ENCODE measurements at regions of chr1 and their contacts with region 1.

Region 1: DNA sequence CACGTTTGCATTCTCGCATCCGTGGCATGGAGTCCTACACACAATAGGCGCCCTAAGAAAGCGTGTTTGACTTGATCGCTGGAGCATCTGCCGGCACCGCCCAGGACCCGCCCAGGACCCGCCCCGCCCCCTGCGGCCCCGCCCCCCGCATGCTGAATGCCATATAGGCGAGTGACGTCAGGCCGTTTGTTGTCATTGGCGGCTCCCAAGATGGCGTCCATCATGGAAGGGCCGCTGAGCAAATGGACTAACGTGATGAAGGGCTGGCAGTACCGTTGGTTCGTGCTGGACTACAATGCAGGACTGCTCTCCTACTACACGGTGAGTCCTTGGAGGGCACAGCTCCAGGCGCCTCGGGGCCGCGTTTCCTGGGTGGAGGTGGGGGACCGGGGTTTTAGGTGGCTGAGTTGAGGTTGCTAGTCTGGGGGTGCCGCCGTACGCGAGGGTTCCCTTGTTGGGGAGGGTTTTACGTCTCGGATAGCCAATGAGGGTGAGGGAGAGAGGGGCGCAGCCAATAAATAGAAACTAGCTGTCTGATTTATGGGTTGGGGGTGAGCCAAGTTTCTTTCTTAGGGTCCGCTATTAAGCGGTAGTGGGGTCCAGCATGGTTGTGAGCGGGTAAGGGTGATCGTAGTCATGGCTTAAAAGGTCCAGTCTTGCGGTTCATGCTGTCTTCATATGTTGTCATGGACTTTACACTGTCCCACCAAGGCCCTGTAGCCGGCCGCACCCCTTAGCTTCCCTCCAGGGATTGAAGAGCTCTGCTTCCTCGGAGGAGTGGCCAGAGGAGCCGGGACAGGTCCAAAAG is at the start of gene OSBPL9:
- DNase-seq: peak; percentile 42
- H3K4me3 ChIP-seq: peak within 1 kb of the TSS; percentile 64
- H3K27me3 ChIP-seq: no peaks in the 10 kb centered on the region
- CTCF ChIP-seq: no peak
- polyA plus RNA-seq, gene OSBPL9: 68.3 and 86.5 TPM in 2 replicates

Region 2: DNA sequence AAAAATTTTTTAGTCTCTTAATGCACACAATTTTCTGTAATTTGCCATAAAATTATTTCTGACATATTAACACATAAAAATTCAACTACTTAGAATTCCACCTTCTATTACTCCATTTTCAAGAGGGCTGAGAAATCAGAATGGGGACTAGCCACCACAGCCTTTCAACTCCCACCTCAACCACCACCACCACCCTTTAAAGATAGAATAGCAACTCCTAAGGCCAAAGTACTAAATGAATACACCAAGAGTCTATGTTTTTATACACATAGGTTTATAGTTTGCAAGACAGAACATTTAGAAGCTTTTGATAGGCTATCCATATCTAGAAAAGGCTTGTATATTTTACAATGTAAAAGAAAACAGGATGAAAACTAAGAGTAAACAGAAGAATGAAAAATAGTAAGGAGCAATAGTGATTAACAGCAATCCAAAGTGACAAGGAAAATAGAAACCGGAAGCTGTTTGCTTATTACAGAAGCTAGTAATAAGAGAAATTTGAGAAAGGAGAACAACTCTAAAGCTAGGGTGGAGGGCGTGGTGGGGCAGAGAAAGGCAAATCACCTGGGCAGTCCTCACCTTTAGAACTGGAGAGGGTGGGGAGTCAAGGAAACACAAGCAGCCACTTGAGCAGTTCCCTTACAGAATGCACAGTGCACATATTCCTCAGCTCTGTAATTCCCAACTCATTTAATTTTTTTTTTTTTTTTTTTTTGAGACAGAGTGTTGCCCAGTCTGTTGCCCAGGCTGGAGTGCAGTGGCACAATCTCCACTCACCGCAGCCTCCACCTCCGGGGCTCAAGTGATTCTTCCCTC is 125.7 kb before region 1 on chr1:
- CTCF ChIA-PET with region 1: no interaction called
- POLR2A ChIA-PET with region 1: no interaction called
- DNase-seq: no peak
- H3K4me3 ChIP-seq: no peak overlapping the region
- H3K27me3 ChIP-seq: no peaks in the 10 kb centered on the region
- CTCF ChIP-seq: no peak

Region 3: GRCh38 chr1:51559064-51559500 is 58.0 kb before region 1 on chr1:
- CTCF ChIA-PET with region 1: no interaction called
- POLR2A ChIA-PET with region 1: no interaction called
- DNase-seq: no peak
- H3K4me3 ChIP-seq: no peak overlapping the region
- H3K27me3 ChIP-seq: no peaks in the 10 kb centered on the region
- CTCF ChIP-seq: no peak

Region 4: DNA sequence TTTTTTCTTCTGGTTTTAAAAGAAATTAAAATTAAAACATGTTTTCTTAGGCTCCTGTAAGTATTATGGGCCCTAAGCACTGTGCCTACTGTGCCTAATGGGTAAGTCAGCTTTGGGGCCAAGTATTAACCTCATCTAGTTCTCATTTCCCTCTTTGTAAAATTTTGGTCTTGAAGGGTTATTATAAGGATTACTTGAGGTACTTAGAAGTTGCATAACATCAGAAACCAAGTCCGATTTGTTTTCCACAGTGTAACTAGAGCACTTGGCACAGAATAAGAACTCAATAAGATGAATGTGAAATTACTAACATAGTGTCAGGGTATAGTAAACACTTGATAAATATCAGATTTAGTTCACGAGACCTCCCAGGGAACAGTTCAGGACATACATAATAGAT is 16.6 kb before region 1 on chr1:
- CTCF ChIA-PET with region 1: interaction called, 4 read pairs
- POLR2A ChIA-PET with region 1: interaction called, 13 read pairs
- DNase-seq: no peak
- H3K4me3 ChIP-seq: no peak overlapping the region
- H3K27me3 ChIP-seq: no peaks in the 10 kb centered on the region
- CTCF ChIP-seq: no peak